HepG2 (cell line): ENCODE measurements at regions of chr12 and their contacts with region 1.

Region 1: GRCh38 chr12:107317751-107318613 is 224.6 kb upstream of the CRY1 start:
- DNase-seq: peak; percentile 82
- ATAC-seq: peak; percentile 95
- H3K4me3 ChIP-seq: peak overlapping the region; percentile 76 to 89 (median 82)
- H3K27ac ChIP-seq: peak overlapping the region; percentile 52
- H3K4me1 ChIP-seq: peaks cover 18% of the 10 kb centered on the region; the same call in 1 of the 2 replicates
- H3K27me3 ChIP-seq: peaks cover 1 to 16% of the 10 kb centered on the region in 2 experiments; a peak in 2 of 5 replicates
- CTCF ChIP-seq: peak; percentile 68
- EP300 ChIP-seq: no peak
- POLR2A ChIP-seq: peak; percentile 50 to 64; a peak in 3 of 4 replicates
- RAD21 ChIP-seq: peak; percentile 51

Region 2: DNA sequence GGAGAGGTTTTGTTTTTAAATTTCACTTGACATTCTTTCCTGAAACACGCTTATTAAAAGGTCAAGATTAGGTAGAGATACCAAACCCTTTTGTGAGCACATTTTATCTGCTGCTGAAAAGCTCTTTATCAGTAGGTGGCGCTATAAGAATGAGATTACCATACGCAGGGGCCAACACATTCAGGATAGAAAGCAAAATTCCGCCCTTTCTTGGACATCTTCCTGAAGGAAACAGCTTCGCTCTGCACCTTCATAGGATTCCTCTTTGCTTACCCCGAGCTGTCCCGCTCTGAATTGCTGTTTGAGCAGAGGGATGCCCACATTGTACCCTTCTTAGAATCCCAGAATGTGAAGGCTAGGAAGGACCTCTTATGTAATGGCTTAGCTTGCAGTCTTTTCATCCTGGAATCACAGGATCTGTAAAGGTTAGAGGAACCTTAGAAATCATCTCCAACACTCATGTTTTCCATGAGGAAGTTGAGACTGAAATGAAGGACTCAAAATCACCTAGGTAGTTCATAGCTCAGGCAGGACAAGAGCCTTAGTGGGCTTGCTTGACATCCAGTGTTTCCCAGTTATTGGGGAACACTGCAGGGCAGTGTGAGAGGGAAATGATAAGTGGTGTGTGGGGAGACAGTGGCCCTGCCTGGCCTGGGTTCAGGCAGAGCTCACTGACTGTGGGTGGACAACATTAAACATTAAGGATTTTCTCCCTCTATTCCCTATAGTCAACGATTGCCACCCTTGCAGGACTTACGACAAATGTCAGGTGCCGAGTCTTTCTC is 186.0 kb before region 1 on chr12:
- CTCF ChIA-PET with region 1: interaction called, 8 read pairs
- POLR2A ChIA-PET with region 1: no interaction called
- in situ Hi-C with region 1: loop called (anchors 5 kb)
- intact Hi-C with region 1: loop called (anchors 2 kb)
- DNase-seq: peak; percentile 49
- ATAC-seq: peak; percentile 73
- H3K4me3 ChIP-seq: no peak overlapping the region
- H3K27ac ChIP-seq: no peak overlapping the region
- H3K4me1 ChIP-seq: peaks cover 23% of the 10 kb centered on the region
- H3K27me3 ChIP-seq: no peaks in the 10 kb centered on the region
- CTCF ChIP-seq: peak; percentile 86
- EP300 ChIP-seq: no peak
- POLR2A ChIP-seq: no peak
- RAD21 ChIP-seq: peak; percentile 75

Region 3: DNA sequence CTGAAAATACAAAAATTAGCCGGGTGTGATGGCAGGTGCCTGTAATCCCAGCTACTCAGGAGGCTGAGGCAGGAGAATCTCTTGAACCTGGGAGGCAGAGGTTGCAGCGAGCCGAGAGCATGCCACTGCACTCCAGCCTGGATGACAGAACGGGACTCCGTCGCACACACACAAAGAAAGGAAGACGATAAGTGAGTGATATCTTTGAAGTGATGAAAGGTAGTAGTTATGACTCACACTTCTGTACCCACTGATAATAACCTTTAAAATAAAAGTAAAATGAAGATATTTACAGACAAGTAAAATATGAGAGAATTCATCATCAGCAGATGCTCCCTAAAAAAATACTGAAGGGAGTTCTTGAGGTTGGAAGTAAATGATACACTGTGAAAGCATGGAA is 53.3 kb before region 1 on chr12:
- CTCF ChIA-PET with region 1: no interaction called
- POLR2A ChIA-PET with region 1: no interaction called
- in situ Hi-C with region 1: no loop called
- intact Hi-C with region 1: no loop called
- DNase-seq: no peak
- ATAC-seq: no peak
- H3K4me3 ChIP-seq: no peak overlapping the region
- H3K27ac ChIP-seq: no peak overlapping the region
- H3K4me1 ChIP-seq: peaks cover 6% of the 10 kb centered on the region; the same call in 1 of the 2 replicates
- H3K27me3 ChIP-seq: peaks cover 0 to 3% of the 10 kb centered on the region in 2 experiments; a peak in 2 of 5 replicates
- CTCF ChIP-seq: no peak
- EP300 ChIP-seq: no peak
- POLR2A ChIP-seq: no peak
- RAD21 ChIP-seq: no peak

Region 4: GRCh38 chr12:107277855-107278254 is 40.1 kb before region 1 on chr12:
- CTCF ChIA-PET with region 1: no interaction called
- POLR2A ChIA-PET with region 1: no interaction called
- in situ Hi-C with region 1: no loop called
- intact Hi-C with region 1: no loop called
- DNase-seq: no peak
- ATAC-seq: no peak
- H3K4me3 ChIP-seq: no peak overlapping the region
- H3K27ac ChIP-seq: no peak overlapping the region
- H3K4me1 ChIP-seq: no peaks in the 10 kb centered on the region
- H3K27me3 ChIP-seq: 0 out of 5 replicates have a peak, but pooled peaks cover 0 to 4% of the 10 kb centered on the region in 2 experiments
- CTCF ChIP-seq: no peak
- EP300 ChIP-seq: no peak
- POLR2A ChIP-seq: no peak
- RAD21 ChIP-seq: no peak

Region 5: DNA sequence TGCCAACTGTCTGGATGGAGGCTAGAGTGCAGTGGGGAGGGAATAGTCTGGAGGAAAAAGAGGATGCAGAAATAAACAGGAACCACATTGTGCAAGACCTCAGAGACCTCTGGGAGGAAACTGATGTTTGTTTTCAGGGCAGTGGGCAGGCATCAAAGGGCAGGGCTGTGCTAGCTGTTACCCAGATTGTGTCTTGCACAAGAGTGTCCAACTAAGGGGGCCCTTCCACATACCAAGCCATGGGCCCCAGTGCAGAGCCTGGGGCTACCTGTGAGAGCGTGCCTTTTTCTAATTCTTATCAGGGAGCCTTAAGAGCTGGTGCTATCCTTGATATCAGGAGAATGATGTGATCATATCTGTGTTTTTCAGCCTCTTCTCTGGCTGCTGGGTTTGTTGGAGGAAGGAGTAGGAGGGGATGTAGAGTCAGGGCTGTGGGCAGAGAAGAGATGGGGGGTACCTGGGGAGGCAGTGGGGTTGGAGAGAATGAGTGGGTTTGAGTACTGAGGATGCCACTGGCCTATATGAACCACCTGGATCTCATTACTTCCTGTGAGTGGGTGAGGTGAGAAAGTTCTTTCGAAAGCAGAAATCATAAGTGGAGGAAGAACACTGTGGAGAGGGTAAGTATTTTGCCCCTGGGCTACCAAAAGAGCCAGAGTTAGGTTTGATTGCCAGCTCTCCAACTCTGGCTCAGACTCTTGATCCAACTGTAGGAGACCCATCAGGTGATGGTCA is 34.5 kb after region 1 on chr12:
- CTCF ChIA-PET with region 1: no interaction called
- POLR2A ChIA-PET with region 1: interaction called, 9 read pairs
- in situ Hi-C with region 1: no loop called
- intact Hi-C with region 1: loop called (anchors 2 kb)
- DNase-seq: peak; percentile 92
- ATAC-seq: peak; percentile 79
- H3K4me3 ChIP-seq: peak overlapping the region in 2 of 3 experiments; percentile 27 to 48; a peak in 2 of 6 replicates
- H3K27ac ChIP-seq: peak overlapping the region; percentile 58
- H3K4me1 ChIP-seq: peaks cover 97% of the 10 kb centered on the region
- H3K27me3 ChIP-seq: no peaks in the 10 kb centered on the region
- CTCF ChIP-seq: no peak
- EP300 ChIP-seq: peak; percentile 76 to 93; a peak in 3 of 4 replicates
- POLR2A ChIP-seq: no peak
- RAD21 ChIP-seq: 0 out of 2 replicates have a peak, but pooled peaks have one; percentile 11

Region 6: GRCh38 chr12:107402041-107403022 is 84.3 kb after region 1 on chr12:
- CTCF ChIA-PET with region 1: no interaction called
- POLR2A ChIA-PET with region 1: no interaction called
- in situ Hi-C with region 1: loop called (anchors 5 kb)
- intact Hi-C with region 1: loop called (anchors 1 kb)
- DNase-seq: peak; percentile 69
- ATAC-seq: peak; percentile 83
- H3K4me3 ChIP-seq: no peak overlapping the region
- H3K27ac ChIP-seq: no peak overlapping the region
- H3K4me1 ChIP-seq: peaks cover 13% of the 10 kb centered on the region
- H3K27me3 ChIP-seq: no peaks in the 10 kb centered on the region; a peak in 1 of 5 replicates
- CTCF ChIP-seq: peak; percentile 82
- EP300 ChIP-seq: no peak
- POLR2A ChIP-seq: no peak
- RAD21 ChIP-seq: peak; percentile 88